Right ventricle myocardium inferior (tissue), 1 donor: ENCODE measurements at regions of chr2 and their contacts with region 1.

Region 1: DNA sequence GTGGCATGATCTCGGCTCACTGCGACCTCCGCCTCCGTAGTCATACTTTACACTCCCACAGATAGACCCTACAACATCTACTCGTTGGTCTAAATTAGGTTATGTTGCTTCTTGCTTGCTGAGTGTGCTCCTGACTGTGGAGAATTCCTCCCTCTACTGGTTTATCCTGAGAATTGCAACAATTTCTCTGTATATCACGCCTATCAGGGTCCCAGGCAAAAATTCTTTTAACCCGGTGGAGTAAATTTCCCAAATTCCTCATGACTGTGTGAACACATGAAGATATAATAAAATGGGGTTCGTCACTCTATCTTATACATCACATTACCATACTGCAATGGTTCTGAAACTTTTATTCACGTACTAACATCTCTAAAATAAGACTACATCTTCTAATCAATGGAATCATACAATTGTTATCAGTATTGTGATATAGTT is 156.7 kb downstream of the EVA1A start:
- DNase-seq: no peak
- ATAC-seq: no peak

Region 2: GRCh38 chr2:74685408-74685807 is 718.6 kb before region 1 on chr2:
- intact Hi-C with region 1: loop called (anchors 10 kb)
- DNase-seq: no peak
- ATAC-seq: no peak

Region 3: GRCh38 chr2:75064691-75065396 is 339.2 kb before region 1 on chr2:
- intact Hi-C with region 1: loop called (anchors 5 kb)
- DNase-seq: peak; percentile 79
- ATAC-seq: no peak